Spleen (tissue), 13 donors: ENCODE measurements at regions of chr10 and their contacts with region 1.

Region 1: DNA sequence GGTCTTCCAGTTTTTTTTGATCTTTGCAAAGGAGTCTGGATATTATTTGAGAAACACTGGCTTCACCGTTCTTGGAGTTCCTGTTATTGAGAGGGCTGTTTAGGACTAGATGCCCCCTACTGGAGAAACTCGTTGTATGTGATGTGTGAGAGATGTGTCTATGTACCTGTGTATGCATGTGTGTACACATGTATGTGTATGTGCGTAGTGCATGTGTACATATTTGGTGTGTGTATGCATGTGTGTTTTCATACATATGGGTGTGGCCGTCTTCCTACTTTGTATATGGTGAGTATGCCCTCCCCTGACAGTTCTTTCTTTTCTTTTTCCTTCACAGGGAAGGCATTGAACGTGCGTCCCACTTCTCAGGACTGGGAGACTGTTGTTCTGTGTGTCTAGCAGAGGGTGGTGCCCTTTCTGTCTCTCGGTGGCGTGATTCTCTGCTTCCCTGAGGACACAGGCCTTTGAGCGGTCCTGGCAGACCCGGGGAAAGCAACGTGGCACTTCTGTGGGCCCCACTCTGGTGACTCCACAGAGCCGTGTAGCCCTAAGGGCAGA is 3.0 kb upstream of the CALHM3 start:
- DNase-seq: no peak
- H3K4me3 ChIP-seq: no peak overlapping the region
- H3K27ac ChIP-seq: no peak overlapping the region
- H3K4me1 ChIP-seq: peaks cover 0 to 30% (median 21%) of the 10 kb centered on the region in 6 donors
- H3K27me3 ChIP-seq: no peaks in the 10 kb centered on the region
- CTCF ChIP-seq: peak; percentile 49 to 79 (median 70)
- POLR2A ChIP-seq: no peak

Region 2: DNA sequence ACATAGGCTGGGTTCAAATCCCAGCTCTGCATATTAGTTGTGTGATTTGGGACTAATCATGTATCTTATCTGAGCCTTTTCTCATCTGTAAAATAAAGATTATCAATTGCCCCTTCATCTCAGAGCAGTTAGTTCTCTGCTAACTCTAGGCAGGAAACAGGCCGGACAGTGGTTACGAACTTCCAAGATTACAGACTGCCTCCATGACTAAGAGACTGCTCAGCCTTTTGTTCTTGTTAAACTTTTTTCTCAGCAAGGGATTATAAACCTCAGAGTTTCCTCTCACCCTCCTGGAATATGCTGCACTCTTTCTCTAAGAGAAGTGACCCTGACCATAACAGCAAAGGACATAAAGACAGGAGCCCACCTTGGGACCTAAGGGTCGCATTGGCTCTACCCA is 1139.1 kb before region 1 on chr10:
- intact Hi-C with region 1: no loop called
- DNase-seq: no peak
- H3K4me3 ChIP-seq: no peak overlapping the region
- H3K27ac ChIP-seq: no peak overlapping the region
- H3K4me1 ChIP-seq: peaks cover 0 to 15% (median 3%) of the 10 kb centered on the region in 6 donors
- H3K27me3 ChIP-seq: no peaks in the 10 kb centered on the region
- CTCF ChIP-seq: no peak
- POLR2A ChIP-seq: no peak

Region 3: GRCh38 chr10:103241262-103242012 is 240.6 kb before region 1 on chr10:
- intact Hi-C with region 1: no loop called
- DNase-seq: no peak
- H3K4me3 ChIP-seq: peak overlapping the region in 1 of 8 donors; percentile 10
- H3K27ac ChIP-seq: peak overlapping the region in 5 of 8 donors; percentile 32 to 86 (median 67)
- H3K4me1 ChIP-seq: peaks cover 0 to 55% (median 26%) of the 10 kb centered on the region in 6 donors
- H3K27me3 ChIP-seq: no peaks in the 10 kb centered on the region
- CTCF ChIP-seq: no peak
- POLR2A ChIP-seq: no peak

Region 4: DNA sequence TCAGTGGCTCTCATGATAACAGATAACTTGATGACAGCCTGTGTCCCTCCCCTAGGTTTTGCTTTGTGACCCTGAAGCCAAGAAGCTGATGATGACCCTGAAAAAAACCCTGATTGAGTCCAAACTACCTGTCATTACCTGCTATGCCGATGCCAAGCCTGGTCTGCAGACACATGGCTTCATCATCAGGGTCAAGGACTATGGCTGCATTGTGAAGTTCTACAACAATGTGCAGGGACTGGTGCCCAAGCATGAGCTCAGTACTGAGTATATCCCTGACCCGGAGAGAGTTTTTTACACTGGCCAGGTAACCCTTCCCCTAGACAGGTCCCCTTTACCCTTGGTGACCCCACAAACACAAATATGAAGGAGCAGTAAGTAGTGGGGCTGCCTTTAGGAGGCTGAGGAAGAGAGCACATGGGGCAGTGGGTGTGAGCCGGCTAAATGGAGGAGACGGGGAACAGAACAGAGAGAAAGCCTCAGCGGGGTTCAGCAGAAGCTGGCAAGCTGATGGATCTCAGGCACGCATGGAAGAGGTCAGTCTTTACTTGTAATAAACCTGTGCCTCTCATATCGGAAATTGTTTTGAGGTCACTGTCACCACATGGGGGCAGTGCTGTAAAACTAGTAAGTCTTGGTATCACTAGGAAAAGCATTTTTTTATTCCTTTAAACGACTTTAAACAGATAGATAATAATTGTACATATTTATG is 65.5 kb before region 1 on chr10:
- intact Hi-C with region 1: loop called (anchors 2 kb)
- DNase-seq: no peak
- H3K4me3 ChIP-seq: no peak overlapping the region
- H3K27ac ChIP-seq: no peak overlapping the region
- H3K4me1 ChIP-seq: no peaks in the 10 kb centered on the region
- H3K27me3 ChIP-seq: no peaks in the 10 kb centered on the region
- CTCF ChIP-seq: peak; percentile 15 to 87 (median 67)
- POLR2A ChIP-seq: no peak

Region 5: GRCh38 chr10:103423748-103424147 is 58.3 kb before region 1 on chr10:
- intact Hi-C with region 1: loop called (anchors 2 kb)
- DNase-seq: no peak
- H3K4me3 ChIP-seq: no peak overlapping the region
- H3K27ac ChIP-seq: no peak overlapping the region
- H3K4me1 ChIP-seq: peaks cover 0 to 4% (median under 1%) of the 10 kb centered on the region in 6 donors
- H3K27me3 ChIP-seq: no peaks in the 10 kb centered on the region
- CTCF ChIP-seq: no peak
- POLR2A ChIP-seq: no peak